Activated CD4-positive, alpha-beta T cell treated with anti-CD3 and anti-CD28 coated beads for 36 hours (primary cell): ENCODE measurements at regions of chr1 and their contacts with region 1.

Region 1: DNA sequence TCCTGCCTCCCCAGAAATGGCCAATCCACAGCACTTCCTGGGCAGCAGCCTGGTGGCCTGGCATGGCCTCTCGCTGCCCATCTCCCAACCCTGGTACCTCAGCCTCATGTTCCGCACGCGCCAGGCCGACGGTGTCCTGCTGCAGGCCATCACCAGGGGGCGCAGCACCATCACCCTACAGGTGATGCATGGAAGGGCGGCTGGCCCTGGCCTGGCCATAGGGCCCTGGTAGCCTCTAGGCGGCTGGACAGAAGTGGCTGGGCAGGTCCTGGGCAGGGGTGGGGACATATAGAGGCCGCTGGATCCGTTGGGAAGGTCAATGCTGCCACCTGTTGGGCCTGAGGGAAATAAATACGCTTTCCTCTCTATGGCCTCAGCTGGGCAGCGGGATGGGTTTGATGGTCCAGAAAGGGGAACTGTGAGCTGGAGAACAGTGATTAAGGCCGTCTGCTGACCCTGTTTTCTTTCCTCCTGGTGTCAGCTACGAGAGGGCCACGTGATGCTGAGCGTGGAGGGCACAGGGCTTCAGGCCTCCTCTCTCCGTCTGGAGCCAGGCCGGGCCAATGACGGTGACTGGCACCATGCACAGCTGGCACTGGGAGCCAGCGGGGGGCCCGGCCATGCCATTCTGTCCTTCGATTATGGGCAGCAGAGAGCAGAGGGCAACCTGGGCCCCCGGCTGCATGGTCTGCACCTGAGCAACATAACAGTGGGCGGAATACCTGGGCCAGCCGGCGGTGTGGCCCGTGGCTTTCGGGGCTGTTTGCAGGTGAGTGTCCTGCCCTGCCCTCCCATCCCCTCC is 14.5 kb downstream of the CELSR2 start:
- DNase-seq: peak; percentile 92
- ATAC-seq: peak; percentile 98
- H3K4me3 Mint-ChIP-seq: no peak overlapping the region
- H3K27ac Mint-ChIP-seq: peak overlapping the region; percentile 89
- H3K4me1 Mint-ChIP-seq: no peaks in the 10 kb centered on the region
- H3K27me3 Mint-ChIP-seq: no peaks in the 10 kb centered on the region

Region 2: GRCh38 chr1:109201123-109201703 is 62.6 kb before region 1 on chr1:
- CTCF ChIA-PET with region 1: interaction called, 12 read pairs
- POLR2A ChIA-PET with region 1: no interaction called
- intact Hi-C with region 1: loop called (anchors 1 to 5 kb)
- DNase-seq: peak; percentile 91
- ATAC-seq: peak; percentile 92
- H3K4me3 Mint-ChIP-seq: no peak overlapping the region
- H3K27ac Mint-ChIP-seq: no peak overlapping the region
- H3K4me1 Mint-ChIP-seq: peaks cover 26% of the 10 kb centered on the region
- H3K27me3 Mint-ChIP-seq: no peaks in the 10 kb centered on the region

Region 3: DNA sequence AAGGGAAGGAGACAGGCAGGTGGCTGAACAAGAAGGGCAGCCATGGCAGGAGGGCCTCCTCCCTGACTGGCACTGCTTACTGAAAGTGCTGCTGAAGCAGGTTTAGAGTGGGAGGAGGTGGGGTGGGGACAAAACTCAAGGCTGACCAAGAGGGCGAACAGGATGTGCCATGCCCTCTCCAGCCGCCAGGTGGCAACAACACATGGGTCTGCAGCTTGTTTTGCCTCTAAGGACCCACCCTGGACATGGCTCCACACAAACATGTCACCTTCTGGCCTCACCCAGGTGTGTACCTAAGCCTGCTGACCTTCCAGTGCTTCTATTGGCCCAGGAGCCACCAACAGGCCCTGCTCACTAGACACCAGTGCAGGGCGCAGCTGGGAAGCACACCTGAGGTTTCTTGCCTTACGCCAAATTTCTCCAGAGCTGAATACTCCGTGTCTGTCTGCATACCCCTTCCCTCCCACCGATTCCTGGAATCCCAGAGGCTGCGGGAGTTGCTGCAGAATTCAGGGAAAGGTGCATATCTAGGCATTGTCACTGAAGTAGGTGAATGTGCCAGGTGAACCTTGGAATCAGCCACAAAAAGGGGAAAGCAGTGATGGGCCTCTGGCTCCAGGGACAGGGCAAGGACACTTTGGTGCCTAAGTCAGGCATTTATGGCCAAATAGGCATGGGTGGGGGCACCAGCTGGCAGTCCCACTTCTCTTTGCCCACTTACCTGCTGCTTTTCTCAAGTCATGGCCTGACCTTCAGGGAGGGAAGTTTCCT is 13.8 kb after region 1 on chr1:
- CTCF ChIA-PET with region 1: interaction called, 15 read pairs
- POLR2A ChIA-PET with region 1: no interaction called
- intact Hi-C with region 1: no loop called
- DNase-seq: peak; percentile 82
- ATAC-seq: peak; percentile 91
- H3K4me3 Mint-ChIP-seq: no peak overlapping the region
- H3K27ac Mint-ChIP-seq: no peak overlapping the region
- H3K4me1 Mint-ChIP-seq: peaks cover 12% of the 10 kb centered on the region
- H3K27me3 Mint-ChIP-seq: no peaks in the 10 kb centered on the region